ENCODE measurements at regions of chr2 and their contacts with region 1.

Region 1: DNA sequence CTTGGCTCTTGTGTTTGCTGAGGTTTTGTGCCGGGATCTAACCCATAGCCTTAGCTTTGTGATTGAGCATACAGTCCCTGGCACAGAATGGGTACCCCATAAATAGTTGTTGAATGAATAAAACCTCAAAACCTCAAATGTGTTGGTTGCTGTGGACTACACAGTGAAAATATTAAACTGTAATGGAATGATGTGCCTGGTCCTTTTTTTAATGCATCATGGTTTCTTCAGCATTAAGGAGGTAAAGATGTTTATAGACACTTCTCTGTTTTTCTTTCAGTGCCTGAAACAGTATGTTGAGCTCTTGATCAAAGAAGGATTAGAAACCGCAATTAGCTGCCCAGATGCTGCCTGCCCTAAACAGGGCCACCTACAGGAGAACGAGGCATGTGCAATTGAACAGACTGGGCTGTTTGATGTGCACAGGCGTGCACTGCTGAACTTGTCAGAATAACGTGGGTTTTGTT is 97.0 kb downstream of the RNF144A start:
- H3K4me3 Mint-ChIP-seq: no peak overlapping the region
- H3K27ac Mint-ChIP-seq: peak overlapping the region; percentile 19
- H3K4me1 Mint-ChIP-seq: peaks cover 25% of the 10 kb centered on the region
- H3K27me3 Mint-ChIP-seq: peaks cover 2% of the 10 kb centered on the region

Region 2: DNA sequence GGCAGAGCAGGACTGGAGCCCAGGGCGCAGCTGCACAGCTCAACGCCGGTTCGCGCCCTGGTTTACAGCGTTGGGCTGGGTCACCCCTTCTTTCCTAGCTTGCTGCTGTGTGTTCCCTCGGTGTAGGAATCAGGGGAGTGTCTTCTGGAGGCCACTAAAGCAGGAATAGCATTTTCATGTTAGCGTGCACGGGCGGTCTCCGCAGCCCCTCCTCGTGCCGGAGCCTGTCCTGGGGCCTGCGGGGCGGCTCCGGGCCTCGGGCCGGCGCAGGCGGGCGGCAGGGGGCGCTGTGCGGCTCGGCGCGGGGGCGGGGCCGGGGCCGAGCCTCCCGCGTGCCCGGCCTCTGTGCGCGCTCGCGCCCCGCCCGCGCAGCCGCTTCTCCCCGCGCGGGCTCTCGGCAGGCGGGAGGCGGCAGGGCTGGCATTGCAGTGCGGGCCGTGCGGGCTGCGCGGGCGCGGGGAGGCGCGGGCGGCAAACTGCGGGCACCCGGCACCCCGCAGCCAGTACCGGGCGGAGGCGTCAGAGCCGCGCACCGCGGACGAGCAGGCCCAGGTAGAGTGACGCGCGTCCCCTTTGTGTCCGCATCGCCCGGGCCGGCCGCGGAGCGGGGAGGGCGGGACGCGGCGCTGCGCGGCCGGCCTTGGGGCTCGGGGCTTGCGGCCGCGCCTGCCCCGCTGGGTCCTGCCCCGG is 97.0 kb before region 1 on chr2 and contains the start of gene RNF144A:
- intact Hi-C with region 1: loop called (anchors 5 kb)
- H3K4me3 Mint-ChIP-seq: peak within 1 kb of the TSS; percentile 58
- H3K27ac Mint-ChIP-seq: no peak within 1 kb of the TSS
- H3K4me1 Mint-ChIP-seq: peaks cover 12% of the 10 kb centered on the region
- H3K27me3 Mint-ChIP-seq: peaks cover 19% of the 10 kb centered on the region

Region 3: GRCh38 chr2:7943446-7943845 is 929.2 kb after region 1 on chr2:
- intact Hi-C with region 1: no loop called
- H3K4me3 Mint-ChIP-seq: no peak overlapping the region
- H3K27ac Mint-ChIP-seq: no peak overlapping the region
- H3K4me1 Mint-ChIP-seq: peaks cover 11% of the 10 kb centered on the region
- H3K27me3 Mint-ChIP-seq: peaks cover 2% of the 10 kb centered on the region